Mammary epithelial cell (primary cell): ENCODE measurements at regions of chr2 and their contacts with region 1.

Region 1: GRCh38 chr2:46239847-46240181 is 57.4 kb upstream of the EPAS1 start:
- DNase-seq: no peak
- H3K4me3 ChIP-seq: no peak overlapping the region
- H3K27ac ChIP-seq: no peak overlapping the region
- H3K4me1 ChIP-seq: peaks cover 3% of the 10 kb centered on the region
- H3K27me3 ChIP-seq: no peaks in the 10 kb centered on the region
- CTCF ChIP-seq: no peak

Region 2: DNA sequence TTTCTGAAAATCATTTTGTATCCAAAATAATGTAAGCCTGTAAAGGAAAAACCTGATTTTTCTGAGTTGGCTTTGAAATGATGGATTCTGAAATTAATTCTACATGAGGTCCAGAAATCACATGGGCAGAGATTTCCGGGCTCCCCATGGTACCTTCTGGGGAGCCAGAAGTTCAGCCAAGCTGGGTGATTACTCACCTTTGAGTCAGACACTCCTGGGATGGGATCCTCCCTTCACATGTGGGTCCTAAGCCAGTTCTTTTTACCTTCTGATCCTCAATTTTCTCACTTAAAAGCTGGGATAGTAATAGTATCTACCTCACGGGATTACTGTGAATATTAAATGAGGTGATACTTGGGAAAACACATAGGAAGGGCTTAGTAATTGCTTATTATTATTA is 122.4 kb before region 1 on chr2:
- CTCF ChIA-PET with region 1: no interaction called
- dilution Hi-C with region 1: no loop called
- in situ Hi-C with region 1: no loop called
- intact Hi-C with region 1: no loop called
- DNase-seq: peak; percentile 81
- H3K4me3 ChIP-seq: no peak overlapping the region
- H3K27ac ChIP-seq: peak overlapping the region; percentile 34
- H3K4me1 ChIP-seq: peaks cover 14% of the 10 kb centered on the region
- H3K27me3 ChIP-seq: no peaks in the 10 kb centered on the region
- CTCF ChIP-seq: no peak

Region 3: DNA sequence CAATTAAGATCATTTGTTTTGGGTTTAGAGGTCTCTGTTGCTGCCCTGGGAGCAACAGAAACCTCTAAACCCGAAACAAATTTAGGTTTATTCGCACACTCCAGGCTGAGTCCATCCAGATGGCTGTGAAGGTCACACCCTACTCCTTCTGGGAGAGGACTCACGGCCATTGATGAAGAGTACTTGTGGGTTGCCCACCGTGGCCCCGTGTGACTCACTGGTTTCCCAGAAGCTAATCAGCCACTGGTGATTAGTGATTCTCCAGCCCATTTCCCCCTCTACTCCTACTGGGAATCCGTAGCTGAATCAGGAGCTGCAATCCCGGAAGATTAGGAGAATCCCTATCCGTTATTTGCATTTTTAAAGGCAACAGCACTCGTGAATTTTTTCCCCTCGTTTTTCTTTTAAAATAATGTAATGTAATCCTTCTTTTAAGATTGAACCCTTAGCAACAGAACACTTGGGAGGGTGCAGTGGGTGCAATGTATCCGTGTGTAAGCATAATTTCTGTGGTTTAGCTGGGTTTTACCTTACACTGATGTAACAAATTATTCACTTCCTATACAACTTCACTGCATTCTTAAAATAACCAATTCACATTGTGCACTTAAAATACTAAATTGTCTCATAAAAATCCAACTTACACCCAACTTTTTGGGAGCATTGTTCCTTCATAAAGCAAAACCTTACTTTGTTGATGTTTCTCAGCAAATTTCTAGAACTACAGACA is 29.9 kb after region 1 on chr2:
- CTCF ChIA-PET with region 1: no interaction called
- dilution Hi-C with region 1: loop called (anchors 5 kb)
- in situ Hi-C with region 1: no loop called
- intact Hi-C with region 1: no loop called
- DNase-seq: no peak
- H3K4me3 ChIP-seq: no peak overlapping the region
- H3K27ac ChIP-seq: no peak overlapping the region
- H3K4me1 ChIP-seq: no peaks in the 10 kb centered on the region
- H3K27me3 ChIP-seq: no peaks in the 10 kb centered on the region
- CTCF ChIP-seq: no peak